Head of caudate nucleus (tissue), 42 donors: ENCODE measurements at regions of chr1 and their contacts with region 1.

Region 1: DNA sequence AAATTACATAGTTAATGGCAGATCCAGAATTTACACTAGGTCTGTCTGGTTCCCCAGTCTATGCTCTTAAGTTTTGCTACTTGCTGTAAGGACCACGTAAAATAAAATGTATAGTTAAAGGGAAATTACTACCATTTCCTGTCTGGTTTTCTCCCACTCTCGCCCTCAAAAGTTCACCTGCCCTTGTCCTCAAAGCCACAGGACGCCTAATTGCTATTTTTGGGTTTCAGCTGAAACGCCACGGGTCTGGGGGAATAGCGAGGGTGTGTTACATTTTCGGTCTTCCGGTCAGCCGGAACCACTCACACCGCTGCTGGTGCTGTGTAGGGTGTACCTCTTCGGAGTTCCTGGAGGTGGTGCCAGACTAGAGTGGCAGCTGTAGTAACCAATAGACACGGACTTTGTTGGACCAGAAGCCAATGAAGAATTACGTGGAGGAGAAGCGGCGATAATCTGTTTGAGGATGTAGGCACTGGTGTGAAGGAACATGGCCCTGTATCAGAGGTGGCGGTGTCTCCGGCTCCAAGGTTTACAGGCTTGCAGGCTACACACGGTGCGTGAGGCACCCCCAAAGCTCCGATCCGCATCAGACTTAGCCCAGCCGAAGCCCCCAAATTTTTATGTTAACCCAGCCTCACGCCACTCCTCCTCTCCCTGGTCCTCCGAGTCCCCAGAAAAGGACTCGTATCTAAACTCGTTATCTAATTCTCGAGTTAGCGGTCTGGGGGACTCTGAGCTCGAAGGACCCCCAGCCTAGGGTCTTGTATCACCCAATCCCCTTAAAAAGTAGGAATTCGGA is at the start of gene TARS2:
- DNase-seq: peak; percentile 69 to 98 (median 94)

Region 2: GRCh38 chr1:150537732-150538684 is 50.8 kb after region 1 on chr1:
- intact Hi-C with region 1: loop called (anchors 10 kb)
- DNase-seq: no peak

Region 3: GRCh38 chr1:150560576-150561253 is 73.6 kb after region 1 on chr1:
- intact Hi-C with region 1: no loop called
- DNase-seq: peak; percentile 61 to 92 (median 82)

Region 4: DNA sequence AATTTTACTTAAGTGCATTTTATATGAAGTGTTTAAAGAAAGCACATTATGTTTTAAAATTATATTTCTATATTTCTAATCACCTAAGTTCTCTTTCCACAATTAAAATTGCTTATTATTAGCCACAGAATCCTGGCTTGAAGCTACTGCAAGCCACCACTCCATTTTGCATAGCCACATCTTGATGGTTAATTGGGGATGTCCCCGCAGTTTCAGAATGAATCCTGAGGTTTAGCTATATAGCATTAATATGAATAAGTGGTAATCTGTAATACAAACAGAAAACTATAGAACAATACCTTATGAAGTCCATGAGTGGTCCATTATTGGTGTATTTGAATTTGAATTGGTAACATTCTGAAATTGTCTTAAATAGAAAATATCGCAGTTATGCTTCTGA is 221.4 kb after region 1 on chr1:
- intact Hi-C with region 1: no loop called
- DNase-seq: no peak